ENCODE measurements at regions of chr17 and their contacts with region 1.

Region 1: DNA sequence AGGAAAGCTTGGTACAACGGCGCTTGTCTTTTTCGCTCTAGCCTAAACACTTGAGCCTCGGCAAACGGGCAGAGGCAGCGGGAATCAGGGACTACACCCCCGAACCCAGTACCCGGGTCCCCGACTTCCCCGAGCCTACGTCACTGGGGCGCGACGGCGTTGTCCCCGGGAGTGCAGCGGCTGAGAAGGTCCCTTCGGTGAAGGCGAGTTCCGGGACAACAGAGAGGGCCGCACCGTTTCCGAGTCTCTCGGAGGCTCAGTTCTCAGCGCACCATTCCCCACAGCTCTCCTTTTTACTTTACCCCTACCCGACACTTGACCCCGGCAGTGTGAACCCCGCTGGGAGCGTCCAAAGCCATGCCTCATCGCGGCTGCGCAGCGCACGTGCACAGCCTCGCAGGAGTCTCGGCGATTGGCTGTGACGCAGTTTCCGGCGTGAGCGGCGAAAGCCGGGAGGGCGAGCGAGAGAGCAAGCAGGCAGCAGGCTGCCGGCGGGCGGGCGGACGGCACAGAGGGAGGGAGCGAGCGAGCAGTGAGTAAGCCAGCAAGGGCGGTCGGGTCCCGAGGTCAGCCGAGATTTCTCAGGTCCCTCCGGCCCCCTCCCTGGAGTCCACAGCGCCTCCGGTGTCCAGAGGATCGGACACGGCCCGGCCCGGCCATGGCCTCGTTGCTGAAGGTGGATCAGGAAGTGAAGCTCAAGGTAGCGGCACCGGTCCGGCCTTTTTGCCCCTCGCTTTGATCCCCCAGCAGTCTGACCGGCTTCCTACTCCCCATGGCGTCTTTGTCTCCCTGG is at the start of gene PSME3:
- DNase-seq: no peak
- H3K4me3 ChIP-seq: peak within 1 kb of the TSS; percentile 74
- H3K27me3 ChIP-seq: no peaks in the 10 kb centered on the region
- CTCF ChIP-seq: no peak
- polyA plus RNA-seq, gene PSME3: 65.7 and 101 TPM in 2 replicates

Region 2: GRCh38 chr17:42819944-42820535 is 13.1 kb before region 1 on chr17:
- CTCF ChIA-PET with region 1: interaction called, 34 read pairs
- POLR2A ChIA-PET with region 1: interaction called, 8 read pairs
- DNase-seq: no peak
- H3K4me3 ChIP-seq: no peak overlapping the region
- H3K27me3 ChIP-seq: no peaks in the 10 kb centered on the region
- CTCF ChIP-seq: peak; percentile 74

Region 3: DNA sequence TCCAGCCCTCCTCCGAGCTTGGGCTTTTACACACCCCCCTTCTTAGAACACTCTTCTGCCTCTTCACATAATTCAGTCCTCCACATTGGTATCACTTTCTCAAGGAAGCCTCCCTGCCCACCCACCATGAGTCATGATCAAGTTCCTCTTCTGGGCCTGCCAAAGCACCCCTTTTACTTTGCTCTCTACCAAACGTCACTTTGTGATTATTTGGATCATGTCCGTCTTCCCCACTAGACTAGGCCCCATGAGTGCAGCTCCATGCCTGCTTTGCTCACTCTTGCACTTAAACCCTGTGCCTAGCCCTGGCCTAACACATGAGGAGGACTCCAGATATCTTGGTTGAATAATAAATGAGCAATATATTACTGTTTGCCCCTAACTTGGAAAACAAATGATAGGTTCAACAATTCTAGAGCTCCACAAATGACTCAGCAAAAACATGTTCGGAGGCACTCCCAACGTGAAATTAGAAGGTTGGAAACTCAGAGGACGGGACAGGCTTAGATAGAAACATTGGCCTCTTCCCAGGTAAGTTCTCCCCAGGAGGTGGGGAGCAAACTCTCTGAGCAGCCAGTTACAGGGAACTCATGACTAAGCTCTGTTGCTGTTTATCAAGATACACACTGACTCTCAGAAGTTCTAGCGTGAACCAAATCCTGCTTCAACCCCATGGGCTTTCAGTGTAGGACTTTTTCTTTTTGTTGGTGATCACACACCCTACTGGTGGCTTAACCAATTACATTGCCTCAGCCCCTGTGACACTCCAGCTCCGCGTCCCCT is 95.7 kb after region 1 on chr17:
- CTCF ChIA-PET with region 1: no interaction called
- POLR2A ChIA-PET with region 1: interaction called, 11 read pairs
- DNase-seq: peak; percentile 9
- H3K4me3 ChIP-seq: no peak overlapping the region
- H3K27me3 ChIP-seq: peaks cover under 1% of the 10 kb centered on the region; the same call in 1 of the 2 replicates
- CTCF ChIP-seq: peak; percentile 50

Region 4: GRCh38 chr17:42937712-42938596 is 104.8 kb after region 1 on chr17:
- CTCF ChIA-PET with region 1: interaction called, 13 read pairs
- POLR2A ChIA-PET with region 1: no interaction called
- DNase-seq: peak; percentile 2
- H3K4me3 ChIP-seq: no peak overlapping the region
- H3K27me3 ChIP-seq: peaks cover 2% of the 10 kb centered on the region; the same call in 1 of the 2 replicates
- CTCF ChIP-seq: peak; percentile 73

Region 5: DNA sequence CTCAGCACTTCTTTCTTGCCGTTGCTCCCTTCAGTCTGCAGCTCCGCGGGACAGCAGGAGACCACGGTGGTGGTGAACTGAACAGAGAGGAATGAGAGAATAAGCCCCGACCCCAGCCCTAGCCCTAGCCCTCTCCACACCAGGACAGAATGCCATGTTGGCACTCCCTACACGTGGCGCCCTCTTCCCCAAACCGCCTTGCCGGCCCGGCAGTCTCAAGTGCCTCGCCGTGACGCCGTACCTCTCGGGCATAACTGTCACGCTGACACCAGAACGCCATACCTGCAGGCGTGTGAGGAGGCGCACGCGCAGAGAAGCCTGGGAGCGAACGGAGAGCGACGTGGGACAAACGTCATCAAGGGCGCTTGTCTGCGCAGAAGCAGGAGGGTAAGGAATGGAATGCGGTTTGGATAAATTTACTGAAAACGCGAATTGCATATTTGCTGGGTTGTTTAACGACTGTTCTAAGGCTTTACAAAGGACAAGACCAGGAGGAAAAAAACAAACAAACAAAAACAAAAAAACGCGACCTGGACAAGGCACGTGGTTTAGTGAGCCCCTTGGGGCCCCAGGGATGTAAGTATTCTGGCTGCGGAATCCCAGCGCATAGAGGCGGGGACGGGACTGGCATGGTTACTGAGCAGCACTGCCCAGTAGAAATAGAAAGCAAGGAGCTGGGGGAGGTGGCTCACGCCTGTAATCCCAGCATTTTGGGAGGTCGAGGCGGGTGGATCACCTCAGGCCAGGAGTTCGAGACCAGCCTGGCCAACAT is 131.2 kb after region 1 on chr17 and contains the start of gene AARSD1:
- CTCF ChIA-PET with region 1: no interaction called
- POLR2A ChIA-PET with region 1: no interaction called
- DNase-seq: peak; percentile 73
- H3K4me3 ChIP-seq: peak within 1 kb of the TSS; percentile 73
- H3K27me3 ChIP-seq: no peaks in the 10 kb centered on the region
- CTCF ChIP-seq: no peak
- polyA plus RNA-seq, gene AARSD1: 45.2 and 51.6 TPM in 2 replicates

Region 6: GRCh38 chr17:42975265-42975664 is 142.1 kb after region 1 on chr17:
- CTCF ChIA-PET with region 1: no interaction called
- POLR2A ChIA-PET with region 1: no interaction called
- DNase-seq: no peak
- H3K4me3 ChIP-seq: no peak overlapping the region
- H3K27me3 ChIP-seq: no peaks in the 10 kb centered on the region
- CTCF ChIP-seq: no peak

Region 7: GRCh38 chr17:43006639-43007551 is 173.7 kb after region 1 on chr17 and contains the start of gene IFI35:
- CTCF ChIA-PET with region 1: no interaction called
- POLR2A ChIA-PET with region 1: no interaction called
- DNase-seq: peak; percentile 51
- H3K4me3 ChIP-seq: peak within 1 kb of the TSS; percentile 58
- H3K27me3 ChIP-seq: no peaks in the 10 kb centered on the region
- CTCF ChIP-seq: peak; percentile 37; the same call in 1 of the 2 replicates
- polyA plus RNA-seq, gene IFI35: 27.7 and 42.5 TPM in 2 replicates